CD4-positive, alpha-beta memory T cell (primary cell): ENCODE measurements at regions of chr5 and their contacts with region 1.

Region 1: DNA sequence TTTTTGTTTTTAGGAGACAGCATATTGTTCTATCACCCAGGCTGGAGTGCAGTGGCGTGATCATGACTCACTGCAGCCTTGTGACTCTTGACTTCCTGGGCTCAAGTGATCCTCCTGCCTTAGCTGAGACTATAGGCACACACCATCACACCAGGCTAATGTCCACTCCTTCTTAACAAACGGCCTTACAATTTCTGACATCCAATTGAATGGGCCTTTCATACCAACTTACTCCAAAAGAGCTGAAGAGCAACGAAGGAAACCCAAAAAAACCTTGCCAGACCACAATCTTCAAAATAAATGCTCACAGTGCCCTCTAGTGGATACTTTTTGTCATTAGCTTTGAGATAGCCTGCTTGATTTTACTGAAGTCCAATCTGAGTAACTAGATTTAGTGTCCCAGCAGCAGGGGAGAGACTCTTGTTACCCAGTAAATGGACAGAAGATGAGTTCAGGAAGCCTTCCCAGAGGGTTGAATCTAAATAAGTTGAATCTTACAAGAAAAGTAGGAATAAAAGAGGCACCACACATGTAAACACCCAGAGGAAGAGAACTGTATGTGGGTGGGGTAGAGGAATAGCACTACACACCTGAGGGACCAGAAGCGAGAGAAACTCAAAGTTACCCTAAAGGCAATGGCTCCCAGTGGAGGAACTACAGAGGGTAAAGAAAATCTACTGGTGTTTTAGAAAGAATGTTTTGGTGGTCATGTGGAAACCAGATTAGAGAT is 9.3 kb downstream of the ZNF622 start:
- DNase-seq: peak; percentile 43 to 67 (median 64)
- H3K4me3 ChIP-seq: peak overlapping the region in 1 of 2 donors; percentile 4
- H3K4me3 Mint-ChIP-seq: peak overlapping the region in 7 of 8 donors; percentile 40 to 82 (median 62)
- H3K27ac ChIP-seq: no peak overlapping the region
- H3K27ac Mint-ChIP-seq: peak overlapping the region; percentile 53 to 92 (median 80)
- H3K4me1 ChIP-seq: peaks cover 67% of the 10 kb centered on the region
- H3K4me1 Mint-ChIP-seq: peaks cover 46 to 72% (median 57%) of the 10 kb centered on the region in 4 donors
- H3K27me3 ChIP-seq: no peaks in the 10 kb centered on the region
- H3K27me3 Mint-ChIP-seq: no peaks in the 10 kb centered on the region

Region 2: GRCh38 chr5:15105796-15106393 is 1350.4 kb before region 1 on chr5:
- CTCF ChIA-PET with region 1: interaction called, 11 read pairs
- POLR2A ChIA-PET with region 1: interaction called, 5 read pairs
- intact Hi-C with region 1: no loop called
- DNase-seq: peak in 3 of 5 donors; percentile 3 to 11 (median 4)
- H3K4me3 ChIP-seq: no peak overlapping the region
- H3K4me3 Mint-ChIP-seq: no peak overlapping the region
- H3K27ac ChIP-seq: no peak overlapping the region
- H3K27ac Mint-ChIP-seq: no peak overlapping the region
- H3K4me1 ChIP-seq: no peaks in the 10 kb centered on the region
- H3K4me1 Mint-ChIP-seq: peaks cover 1 to 6% (median 3%) of the 10 kb centered on the region in 4 donors
- H3K27me3 ChIP-seq: no peaks in the 10 kb centered on the region
- H3K27me3 Mint-ChIP-seq: peaks cover 0 to 2% of the 10 kb centered on the region in 2 donors

Region 3: DNA sequence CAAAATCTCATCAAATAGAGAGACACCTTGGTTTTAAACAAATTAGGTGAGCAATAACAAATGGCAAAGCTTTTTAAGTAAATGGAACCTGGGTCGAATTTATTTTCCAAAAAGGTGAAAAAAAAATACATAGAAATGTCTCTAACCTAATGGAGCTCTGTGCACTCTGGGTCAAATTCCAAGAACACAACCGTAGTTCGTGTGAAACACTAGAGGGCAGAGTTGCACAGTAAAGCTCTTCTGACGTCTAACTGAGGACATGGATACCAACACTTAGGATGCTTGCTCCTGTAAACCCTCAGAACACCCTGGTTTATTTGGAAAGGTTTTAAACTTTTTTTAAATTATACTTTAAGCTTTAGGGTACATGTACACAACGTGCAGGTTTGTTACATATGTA is 295.6 kb before region 1 on chr5:
- CTCF ChIA-PET with region 1: interaction called, 10 read pairs
- POLR2A ChIA-PET with region 1: no interaction called
- intact Hi-C with region 1: no loop called
- DNase-seq: peak in 4 of 5 donors; percentile 0 to 10 (median 2)
- H3K4me3 ChIP-seq: no peak overlapping the region
- H3K4me3 Mint-ChIP-seq: no peak overlapping the region
- H3K27ac ChIP-seq: no peak overlapping the region
- H3K27ac Mint-ChIP-seq: no peak overlapping the region
- H3K4me1 ChIP-seq: no peaks in the 10 kb centered on the region
- H3K4me1 Mint-ChIP-seq: no peaks in the 10 kb centered on the region
- H3K27me3 ChIP-seq: no peaks in the 10 kb centered on the region
- H3K27me3 Mint-ChIP-seq: no peaks in the 10 kb centered on the region

Region 4: DNA sequence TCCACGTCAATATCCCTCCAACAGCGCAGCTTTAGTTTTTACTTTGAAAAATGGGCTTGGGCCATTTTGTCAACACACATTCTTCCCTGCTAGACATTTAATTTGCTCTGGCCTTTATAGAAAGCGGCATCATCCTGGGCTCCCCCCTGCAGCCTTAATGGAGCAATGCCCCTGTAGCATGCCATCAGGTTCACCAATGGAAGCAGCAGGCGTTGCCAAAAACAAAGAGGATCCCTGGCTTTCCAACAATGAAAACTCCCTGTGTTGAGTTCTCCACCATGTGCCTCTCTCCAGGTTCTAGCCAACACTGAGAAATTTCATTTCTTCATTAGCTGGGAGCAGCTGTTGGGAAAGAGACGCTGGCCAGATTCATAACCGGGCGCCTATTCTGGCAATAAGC is 130.1 kb before region 1 on chr5:
- CTCF ChIA-PET with region 1: no interaction called
- POLR2A ChIA-PET with region 1: no interaction called
- intact Hi-C with region 1: no loop called
- DNase-seq: no peak
- H3K4me3 ChIP-seq: no peak overlapping the region
- H3K4me3 Mint-ChIP-seq: no peak overlapping the region
- H3K27ac ChIP-seq: no peak overlapping the region
- H3K27ac Mint-ChIP-seq: no peak overlapping the region
- H3K4me1 ChIP-seq: no peaks in the 10 kb centered on the region
- H3K4me1 Mint-ChIP-seq: no peaks in the 10 kb centered on the region
- H3K27me3 ChIP-seq: no peaks in the 10 kb centered on the region
- H3K27me3 Mint-ChIP-seq: peaks cover 0 to 9% of the 10 kb centered on the region in 2 donors

Region 5: DNA sequence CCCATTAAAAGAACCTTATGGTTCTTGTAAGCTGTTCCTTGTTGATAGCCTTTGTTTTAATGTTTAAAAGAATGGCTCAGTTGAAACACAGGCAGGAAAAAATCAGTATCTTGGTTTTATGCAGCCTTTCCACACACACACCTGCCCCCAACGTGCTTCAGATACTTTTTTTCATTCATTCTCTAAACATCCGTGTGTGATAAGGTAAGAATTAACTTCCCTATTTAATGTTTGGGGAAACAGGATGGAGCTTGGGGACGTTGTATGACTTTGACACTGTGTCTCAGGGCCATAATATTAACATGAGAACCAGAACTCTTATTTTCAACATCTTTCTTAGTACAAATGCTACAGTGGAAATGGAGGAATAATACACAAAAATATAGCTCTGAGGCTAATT is 15.1 kb after region 1 on chr5:
- CTCF ChIA-PET with region 1: interaction called, 23 read pairs
- POLR2A ChIA-PET with region 1: interaction called, 4 read pairs
- intact Hi-C with region 1: no loop called
- DNase-seq: no peak
- H3K4me3 ChIP-seq: no peak overlapping the region
- H3K4me3 Mint-ChIP-seq: no peak overlapping the region
- H3K27ac ChIP-seq: no peak overlapping the region
- H3K27ac Mint-ChIP-seq: peak overlapping the region in 2 of 7 donors; percentile 44 to 72
- H3K4me1 ChIP-seq: peaks cover 17% of the 10 kb centered on the region
- H3K4me1 Mint-ChIP-seq: peaks cover 30 to 38% (median 34%) of the 10 kb centered on the region in 4 donors
- H3K27me3 ChIP-seq: no peaks in the 10 kb centered on the region
- H3K27me3 Mint-ChIP-seq: no peaks in the 10 kb centered on the region

Region 6: GRCh38 chr5:16483361-16483760 is 27.1 kb after region 1 on chr5:
- CTCF ChIA-PET with region 1: interaction called, 11 read pairs
- POLR2A ChIA-PET with region 1: no interaction called
- intact Hi-C with region 1: no loop called
- DNase-seq: no peak
- H3K4me3 ChIP-seq: no peak overlapping the region
- H3K4me3 Mint-ChIP-seq: no peak overlapping the region
- H3K27ac ChIP-seq: no peak overlapping the region
- H3K27ac Mint-ChIP-seq: peak overlapping the region in 2 of 7 donors; percentile 9 to 64
- H3K4me1 ChIP-seq: no peaks in the 10 kb centered on the region
- H3K4me1 Mint-ChIP-seq: peaks cover 0 to 27% (median 10%) of the 10 kb centered on the region in 4 donors
- H3K27me3 ChIP-seq: no peaks in the 10 kb centered on the region
- H3K27me3 Mint-ChIP-seq: no peaks in the 10 kb centered on the region

Region 7: GRCh38 chr5:16666883-16667398 is 210.7 kb after region 1 on chr5:
- CTCF ChIA-PET with region 1: interaction called, 28 read pairs
- POLR2A ChIA-PET with region 1: no interaction called
- intact Hi-C with region 1: loop called (anchors 1 kb)
- DNase-seq: peak in 4 of 5 donors; percentile 8 to 34 (median 22)
- H3K4me3 ChIP-seq: no peak overlapping the region
- H3K4me3 Mint-ChIP-seq: peak overlapping the region in 3 of 8 donors; percentile 8 to 75 (median 58)
- H3K27ac ChIP-seq: no peak overlapping the region
- H3K27ac Mint-ChIP-seq: peak overlapping the region in 1 of 7 donors; percentile 43
- H3K4me1 ChIP-seq: no peaks in the 10 kb centered on the region
- H3K4me1 Mint-ChIP-seq: peaks cover 0 to 3% (median 0%) of the 10 kb centered on the region in 4 donors
- H3K27me3 ChIP-seq: no peaks in the 10 kb centered on the region
- H3K27me3 Mint-ChIP-seq: peaks cover 0 to 5% of the 10 kb centered on the region in 2 donors